Activated naive CD4-positive, alpha-beta T cell treated with anti-CD3 and anti-CD28 coated beads, Interleukin-2, amount 10 ng/mL, durations not matched to agents 7 days and 5 days (primary cell): ENCODE measurements at regions of chr10 and their contacts with region 1.

Region 1: GRCh38 chr10:22655311-22655981 is 58.9 kb downstream of the PIP4K2A start:
- DNase-seq: peak; percentile 56
- H3K4me3 Mint-ChIP-seq: peak overlapping the region; percentile 45
- H3K27ac Mint-ChIP-seq: peak overlapping the region; percentile 88
- H3K4me1 Mint-ChIP-seq: peaks cover 97% of the 10 kb centered on the region
- H3K27me3 Mint-ChIP-seq: no peaks in the 10 kb centered on the region

Region 2: DNA sequence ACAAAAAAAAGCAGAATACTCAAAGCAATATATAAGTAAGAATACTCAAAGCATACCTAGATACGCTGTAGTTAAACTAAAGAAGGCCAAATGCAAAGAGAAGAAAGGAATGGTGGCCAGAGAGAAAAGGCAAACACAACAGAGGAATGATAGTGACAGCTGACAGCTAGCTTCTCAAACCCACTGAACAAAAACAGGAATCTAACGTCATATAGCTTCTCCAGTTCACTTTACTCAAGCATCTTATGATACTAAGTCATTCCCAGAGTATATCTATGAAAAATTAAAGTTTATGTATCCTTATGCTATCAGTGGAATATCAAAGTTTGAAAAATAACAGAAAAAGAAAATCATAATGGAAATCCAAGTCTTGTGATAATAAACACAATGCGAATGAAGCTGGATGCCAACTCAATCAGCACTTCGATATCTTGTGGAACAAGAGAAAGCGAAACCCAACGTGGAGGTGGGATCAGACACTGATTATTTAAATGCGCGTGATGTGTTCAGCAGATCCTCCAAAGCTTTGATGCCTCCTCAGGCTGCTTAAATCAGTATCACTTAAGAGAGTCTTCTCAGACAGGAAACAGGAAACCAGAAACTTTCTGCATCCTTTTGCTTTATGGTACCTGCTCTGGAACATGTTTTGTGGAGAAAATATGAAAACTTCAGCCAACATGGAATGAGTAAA is 43.9 kb before region 1 on chr10:
- CTCF ChIA-PET with region 1: interaction called, 11 read pairs
- DNase-seq: peak; percentile 86
- H3K4me3 Mint-ChIP-seq: peak overlapping the region; percentile 63
- H3K27ac Mint-ChIP-seq: peak overlapping the region; percentile 93
- H3K4me1 Mint-ChIP-seq: peaks cover 90% of the 10 kb centered on the region
- H3K27me3 Mint-ChIP-seq: no peaks in the 10 kb centered on the region

Region 3: DNA sequence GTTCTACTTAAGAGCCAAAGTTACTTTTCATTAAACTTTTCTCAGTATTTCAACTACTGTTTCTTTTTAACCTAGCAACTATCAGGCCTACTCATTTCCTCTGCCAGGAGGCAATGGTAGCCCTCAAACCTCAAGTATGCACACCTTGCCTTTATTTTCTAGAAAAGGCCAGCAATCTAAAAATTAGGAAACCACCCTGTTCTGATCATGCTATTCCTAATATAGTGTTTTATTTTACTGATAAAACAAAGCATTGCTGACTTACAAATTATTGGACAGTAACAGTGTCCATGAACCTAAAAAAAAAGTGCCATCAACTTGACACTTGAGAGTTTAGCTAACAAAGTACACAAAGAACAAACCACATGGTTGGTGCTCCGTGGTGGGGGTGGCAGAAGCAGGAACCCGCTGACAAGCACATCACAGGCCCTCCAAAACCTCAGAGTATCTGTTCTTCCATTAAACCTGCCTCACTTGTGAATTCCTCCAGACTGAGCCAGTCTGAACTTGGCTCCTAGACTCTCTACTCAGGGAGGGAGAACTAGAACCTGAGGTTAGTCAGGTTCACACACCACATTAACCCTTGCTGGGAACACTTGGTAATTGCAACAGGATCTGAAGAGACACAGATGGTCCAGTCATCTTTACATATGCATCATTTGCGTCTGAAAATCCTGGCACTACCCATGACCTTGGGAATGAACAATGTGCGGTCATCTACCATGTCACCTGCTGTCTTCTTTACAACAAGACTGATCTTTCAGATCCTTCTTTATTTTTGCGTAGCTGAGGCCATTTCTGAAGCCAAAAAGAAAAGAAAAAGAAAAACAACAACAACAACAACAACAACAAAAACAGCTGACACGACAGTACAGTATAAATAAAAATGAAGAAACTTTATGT is 27.0 kb after region 1 on chr10:
- CTCF ChIA-PET with region 1: interaction called, 15 read pairs
- DNase-seq: peak; percentile 80
- H3K4me3 Mint-ChIP-seq: peak overlapping the region; percentile 62
- H3K27ac Mint-ChIP-seq: peak overlapping the region; percentile 100
- H3K4me1 Mint-ChIP-seq: peaks cover 90% of the 10 kb centered on the region
- H3K27me3 Mint-ChIP-seq: no peaks in the 10 kb centered on the region